ENCODE measurements at regions of chr2 and their contacts with region 1.

Region 1: DNA sequence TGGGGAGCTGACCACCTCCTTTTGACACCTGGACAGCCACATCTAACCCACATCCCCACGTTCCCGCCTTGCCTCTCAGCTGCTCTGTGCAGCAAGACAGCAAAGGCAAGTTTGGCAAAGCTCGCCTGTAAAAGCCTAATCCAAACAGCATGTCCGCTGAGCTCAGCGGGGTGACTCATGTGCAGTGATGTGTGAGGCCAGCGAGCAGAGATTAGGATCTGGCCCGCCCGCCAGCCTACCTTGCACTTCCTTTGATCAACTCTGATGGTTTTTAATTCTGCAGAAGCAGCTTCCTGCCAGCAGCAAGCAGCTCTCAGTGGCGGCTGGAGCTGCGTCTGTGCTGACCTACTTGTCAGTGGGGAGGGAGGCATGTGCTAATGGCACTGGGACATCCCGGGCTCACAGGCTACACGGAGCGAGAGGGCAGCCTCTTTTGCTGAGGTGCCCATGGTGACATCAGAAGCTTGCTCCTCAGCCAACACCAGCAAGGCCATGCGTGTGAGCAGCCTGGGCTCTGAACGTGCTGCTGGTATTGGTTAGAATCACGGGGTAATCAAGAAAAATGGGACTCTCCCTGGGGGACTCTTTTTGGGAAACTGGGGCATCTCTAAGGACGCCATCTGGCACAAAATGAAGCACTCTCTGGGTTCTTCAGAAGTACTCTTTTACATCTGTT is 36.0 kb upstream of the EML4 start:
- DNase-seq: peak; percentile 92 to 99 (median 96)
- H3K4me3 ChIP-seq: peak overlapping the region; percentile 16 to 21
- H3K4me3 Mint-ChIP-seq: peak overlapping the region; percentile 58 to 88 (median 76)
- H3K27ac ChIP-seq: peak overlapping the region; percentile 93
- H3K27ac Mint-ChIP-seq: peak overlapping the region; percentile 88 to 100 (median 99)
- H3K4me1 ChIP-seq: peaks cover 99% of the 10 kb centered on the region
- H3K4me1 Mint-ChIP-seq: peaks cover 68 to 100% (median 88%) of the 10 kb centered on the region in 4 donors
- H3K27me3 ChIP-seq: no peaks in the 10 kb centered on the region
- H3K27me3 Mint-ChIP-seq: no peaks in the 10 kb centered on the region

Region 2: DNA sequence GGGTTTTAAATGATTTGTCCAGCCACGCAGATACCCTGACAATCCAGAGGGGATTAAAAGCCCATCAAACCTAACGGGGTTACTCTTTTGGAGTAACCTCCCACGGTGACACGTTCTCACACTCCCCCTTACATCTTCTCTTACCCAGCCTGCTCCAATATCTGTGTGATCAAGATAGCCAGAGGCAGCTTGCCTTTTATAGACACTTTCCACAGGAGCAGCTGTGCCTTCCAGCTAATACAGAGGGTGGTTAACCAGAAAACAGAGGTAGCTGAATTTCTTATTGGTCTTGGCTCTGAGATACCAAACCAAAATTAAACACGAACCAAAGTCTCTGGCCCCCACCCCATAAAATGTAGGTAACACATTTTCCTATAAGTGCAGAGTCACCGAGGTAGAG is 318.1 kb before region 1 on chr2:
- CTCF ChIA-PET with region 1: no interaction called
- POLR2A ChIA-PET with region 1: no interaction called
- intact Hi-C with region 1: no loop called
- DNase-seq: no peak
- H3K4me3 ChIP-seq: no peak overlapping the region
- H3K4me3 Mint-ChIP-seq: no peak overlapping the region
- H3K27ac ChIP-seq: no peak overlapping the region
- H3K27ac Mint-ChIP-seq: no peak overlapping the region
- H3K4me1 ChIP-seq: no peaks in the 10 kb centered on the region
- H3K4me1 Mint-ChIP-seq: no peaks in the 10 kb centered on the region
- H3K27me3 ChIP-seq: no peaks in the 10 kb centered on the region
- H3K27me3 Mint-ChIP-seq: peaks cover 13 to 15% of the 10 kb centered on the region in 2 donors

Region 3: DNA sequence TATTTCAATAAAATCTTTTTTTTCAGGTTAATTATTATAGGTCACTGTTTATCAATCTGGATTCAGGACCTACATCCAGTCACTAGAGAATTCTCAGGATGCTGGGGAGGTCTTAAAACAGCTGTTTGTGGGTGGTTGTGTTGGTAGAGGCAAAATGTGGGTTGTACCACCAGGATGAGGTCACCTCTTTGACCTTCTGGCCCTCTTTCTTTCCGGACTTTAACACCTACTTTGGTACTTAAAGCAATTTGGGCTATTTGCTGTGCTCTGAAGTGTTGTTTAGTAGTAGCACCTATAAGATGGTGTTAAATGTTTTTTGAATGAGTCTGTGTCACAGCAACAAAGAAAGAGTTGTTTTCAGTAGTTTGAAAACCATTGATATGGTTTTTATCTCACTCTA is 50.7 kb after region 1 on chr2:
- CTCF ChIA-PET with region 1: interaction called, 7 read pairs
- POLR2A ChIA-PET with region 1: interaction called, 18 read pairs
- intact Hi-C with region 1: no loop called
- DNase-seq: no peak
- H3K4me3 ChIP-seq: no peak overlapping the region
- H3K4me3 Mint-ChIP-seq: peak overlapping the region in 3 of 8 donors; percentile 19 to 47 (median 40)
- H3K27ac ChIP-seq: no peak overlapping the region
- H3K27ac Mint-ChIP-seq: peak overlapping the region in 2 of 7 donors; percentile 27 to 38
- H3K4me1 ChIP-seq: peaks cover 88% of the 10 kb centered on the region
- H3K4me1 Mint-ChIP-seq: peaks cover 63 to 90% (median 76%) of the 10 kb centered on the region in 4 donors
- H3K27me3 ChIP-seq: no peaks in the 10 kb centered on the region
- H3K27me3 Mint-ChIP-seq: no peaks in the 10 kb centered on the region